IMR-90 (cell line): ENCODE measurements at regions of chr2 and their contacts with region 1.

Region 1: GRCh38 chr2:237181844-237182243 is 96.2 kb downstream of the COPS8 start:
- DNase-seq: peak; percentile 100
- ATAC-seq: peak; percentile 43
- H3K4me3 ChIP-seq: no peak overlapping the region
- H3K27ac ChIP-seq: peak overlapping the region; percentile 93
- H3K4me1 ChIP-seq: peaks cover 42% of the 10 kb centered on the region
- H3K27me3 ChIP-seq: no peaks in the 10 kb centered on the region
- CTCF ChIP-seq: no peak
- POLR2A ChIP-seq: no peak
- RAD21 ChIP-seq: no peak; the same call in 1 of the 2 replicates

Region 2: DNA sequence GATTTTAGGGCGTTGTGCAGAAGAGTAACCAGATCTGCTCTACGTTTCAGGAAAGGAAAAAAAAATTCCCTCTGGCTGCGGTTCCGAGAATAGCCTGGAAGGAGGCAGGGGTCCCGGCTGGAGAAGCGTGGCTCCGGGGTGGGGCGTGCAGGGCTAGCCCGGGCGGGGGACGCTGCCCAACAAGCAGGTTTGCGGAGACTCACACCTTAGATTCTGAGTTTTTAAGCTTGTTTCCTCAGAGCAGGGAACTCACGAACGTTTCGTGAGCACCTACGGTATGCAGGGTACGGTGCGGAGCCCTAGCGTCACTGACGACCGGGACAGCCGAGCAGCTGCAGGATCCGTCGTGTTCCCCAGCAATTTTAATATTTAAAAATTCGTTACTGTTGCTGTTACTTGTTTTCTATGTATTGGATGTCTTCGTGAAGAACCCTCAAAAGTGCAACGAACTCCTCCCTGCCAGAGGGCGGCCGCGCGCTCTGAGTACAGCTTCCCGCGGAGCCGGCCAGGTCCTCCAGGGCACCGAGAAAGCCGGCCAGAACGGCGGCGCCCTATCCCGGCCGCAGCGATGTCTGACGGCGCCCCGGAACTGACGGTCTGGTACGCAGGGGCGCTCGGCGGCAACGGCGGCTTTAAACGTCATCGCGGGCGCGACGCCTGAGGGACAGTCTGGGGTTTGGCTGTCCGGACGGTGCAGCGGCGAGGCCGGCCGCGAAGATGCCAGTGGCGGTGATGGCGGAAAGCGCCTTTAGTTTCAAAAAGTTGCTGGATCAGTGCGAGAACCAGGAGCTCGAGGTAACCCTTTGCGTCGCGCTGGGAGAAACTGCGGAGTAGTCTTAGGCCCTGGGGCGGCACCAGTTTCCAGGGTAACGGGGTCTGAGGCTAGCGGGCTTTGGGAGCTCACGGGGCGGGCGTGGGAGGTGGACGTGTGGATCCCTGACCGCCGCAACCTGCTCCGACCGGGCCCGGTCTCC is 96.3 kb before region 1 on chr2 and contains the start of gene COPS8:
- CTCF ChIA-PET with region 1: no interaction called
- POLR2A ChIA-PET with region 1: no interaction called
- dilution Hi-C with region 1: no loop called
- in situ Hi-C with region 1: no loop called
- intact Hi-C with region 1: no loop called
- DNase-seq: peak; percentile 91
- ATAC-seq: peak; percentile 99
- H3K4me3 ChIP-seq: peak within 1 kb of the TSS; percentile 66
- H3K27ac ChIP-seq: peak within 1 kb of the TSS; percentile 82
- H3K4me1 ChIP-seq: no peaks in the 10 kb centered on the region; the same call in 1 of the 2 replicates
- H3K27me3 ChIP-seq: no peaks in the 10 kb centered on the region
- CTCF ChIP-seq: peak; percentile 26
- POLR2A ChIP-seq: peak; percentile 96
- RAD21 ChIP-seq: no peak; the same call in 1 of the 2 replicates
- total RNA-seq, gene COPS8: 47.0 and 61.4 TPM in 2 replicates

Region 3: GRCh38 chr2:237128026-237128703 is 53.7 kb before region 1 on chr2:
- CTCF ChIA-PET with region 1: no interaction called
- POLR2A ChIA-PET with region 1: no interaction called
- dilution Hi-C with region 1: no loop called
- in situ Hi-C with region 1: no loop called
- intact Hi-C with region 1: no loop called
- DNase-seq: peak; percentile 100
- ATAC-seq: peak; percentile 97
- H3K4me3 ChIP-seq: no peak overlapping the region
- H3K27ac ChIP-seq: peak overlapping the region; percentile 83
- H3K4me1 ChIP-seq: peaks cover 23% of the 10 kb centered on the region
- H3K27me3 ChIP-seq: no peaks in the 10 kb centered on the region
- CTCF ChIP-seq: peak; percentile 25; the same call in 1 of the 2 replicates
- POLR2A ChIP-seq: no peak
- RAD21 ChIP-seq: peak; percentile 28

Region 4: DNA sequence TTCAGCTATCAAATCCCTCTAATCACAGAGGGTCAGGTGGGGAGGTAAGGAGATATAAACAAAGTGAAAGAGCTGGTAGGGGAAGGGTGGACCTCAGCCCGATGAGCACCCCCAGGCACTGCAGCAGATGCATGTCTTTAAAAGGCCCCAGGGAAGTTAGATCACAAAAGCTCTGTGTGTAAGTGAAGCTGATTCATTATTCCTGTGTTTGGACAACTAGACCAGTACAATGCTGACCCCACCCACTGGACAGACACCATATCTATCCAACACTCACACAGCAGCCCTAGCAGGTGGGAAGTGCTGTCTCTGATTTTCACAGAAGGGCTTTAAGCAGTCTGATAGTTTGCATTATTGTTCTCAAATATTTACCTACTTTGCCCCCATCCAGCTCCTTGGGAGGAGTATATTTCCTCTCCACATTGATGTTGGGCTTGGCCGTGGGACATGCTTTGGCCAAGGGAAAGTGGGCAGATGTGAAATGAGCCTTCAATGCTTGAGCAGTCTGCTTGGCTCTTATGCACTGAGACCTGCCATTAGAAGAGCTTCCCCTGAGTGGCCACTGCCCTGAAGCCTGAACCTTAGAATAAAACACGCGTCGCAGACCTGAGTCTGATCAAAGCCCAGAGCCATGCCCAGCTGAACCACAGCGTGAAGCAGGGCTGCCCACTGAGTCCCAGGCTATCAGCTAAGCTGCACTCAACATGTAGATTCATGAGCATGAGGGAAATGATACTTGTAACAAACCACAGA is 15.2 kb after region 1 on chr2:
- CTCF ChIA-PET with region 1: interaction called, 5 read pairs
- POLR2A ChIA-PET with region 1: interaction called, 13 read pairs
- dilution Hi-C with region 1: no loop called
- in situ Hi-C with region 1: no loop called
- intact Hi-C with region 1: no loop called
- DNase-seq: peak; percentile 96
- ATAC-seq: peak; percentile 68
- H3K4me3 ChIP-seq: no peak overlapping the region
- H3K27ac ChIP-seq: peak overlapping the region; percentile 98
- H3K4me1 ChIP-seq: peaks cover 49% of the 10 kb centered on the region
- H3K27me3 ChIP-seq: no peaks in the 10 kb centered on the region
- CTCF ChIP-seq: no peak
- POLR2A ChIP-seq: peak; percentile 24; the same call in 1 of the 2 replicates
- RAD21 ChIP-seq: peak; percentile 18; the same call in 1 of the 2 replicates

Region 5: DNA sequence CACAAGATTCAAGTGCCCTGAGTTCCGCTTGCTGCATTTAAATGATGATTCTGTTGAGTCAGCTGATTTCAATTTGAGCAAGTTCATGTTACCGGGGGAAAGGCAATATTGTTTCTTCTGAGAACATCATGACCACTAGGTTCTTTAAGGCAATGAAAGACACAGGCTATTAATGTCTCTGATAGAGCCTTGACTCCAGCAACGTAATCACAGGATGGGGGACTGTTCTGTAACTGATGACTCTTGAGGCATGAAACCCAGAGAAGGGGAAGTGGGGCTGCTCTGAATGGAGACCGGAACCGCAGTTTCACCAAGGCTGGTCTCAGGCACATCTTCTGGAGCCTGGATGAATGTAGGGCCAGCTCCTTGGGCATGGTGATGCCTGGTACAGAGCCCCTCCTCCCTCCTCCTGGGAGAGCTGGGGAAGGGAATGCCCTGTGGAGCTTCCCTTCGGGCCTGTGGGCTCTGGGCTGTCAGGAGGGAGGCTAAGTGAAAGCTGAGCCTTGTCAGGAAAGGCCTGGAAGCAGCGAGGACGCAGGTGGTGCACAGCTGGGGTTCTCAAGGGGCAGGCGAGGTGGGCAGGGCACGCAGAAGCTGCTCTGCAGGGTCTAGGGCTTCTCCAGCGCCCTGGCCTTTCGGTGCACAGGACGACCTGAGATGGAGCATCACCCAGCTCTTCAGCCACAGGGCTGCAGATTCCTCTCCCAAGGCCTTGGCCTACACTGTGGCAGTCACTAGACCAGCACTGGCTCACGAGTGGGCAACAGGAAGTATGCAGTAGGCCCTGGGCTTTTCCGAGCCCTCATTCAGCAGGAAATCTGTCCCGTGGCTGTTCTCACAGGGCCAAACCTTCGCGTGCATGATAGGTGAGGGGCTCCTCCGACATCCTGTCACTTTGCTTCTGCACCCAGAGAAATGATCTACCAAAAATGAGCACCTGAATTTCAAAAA is 347.9 kb after region 1 on chr2:
- CTCF ChIA-PET with region 1: no interaction called
- POLR2A ChIA-PET with region 1: interaction called, 17 read pairs
- dilution Hi-C with region 1: no loop called
- in situ Hi-C with region 1: no loop called
- intact Hi-C with region 1: no loop called
- DNase-seq: no peak
- ATAC-seq: no peak
- H3K4me3 ChIP-seq: no peak overlapping the region
- H3K27ac ChIP-seq: no peak overlapping the region
- H3K4me1 ChIP-seq: no peaks in the 10 kb centered on the region
- H3K27me3 ChIP-seq: no peaks in the 10 kb centered on the region
- CTCF ChIP-seq: no peak
- POLR2A ChIP-seq: no peak
- RAD21 ChIP-seq: no peak

Region 6: DNA sequence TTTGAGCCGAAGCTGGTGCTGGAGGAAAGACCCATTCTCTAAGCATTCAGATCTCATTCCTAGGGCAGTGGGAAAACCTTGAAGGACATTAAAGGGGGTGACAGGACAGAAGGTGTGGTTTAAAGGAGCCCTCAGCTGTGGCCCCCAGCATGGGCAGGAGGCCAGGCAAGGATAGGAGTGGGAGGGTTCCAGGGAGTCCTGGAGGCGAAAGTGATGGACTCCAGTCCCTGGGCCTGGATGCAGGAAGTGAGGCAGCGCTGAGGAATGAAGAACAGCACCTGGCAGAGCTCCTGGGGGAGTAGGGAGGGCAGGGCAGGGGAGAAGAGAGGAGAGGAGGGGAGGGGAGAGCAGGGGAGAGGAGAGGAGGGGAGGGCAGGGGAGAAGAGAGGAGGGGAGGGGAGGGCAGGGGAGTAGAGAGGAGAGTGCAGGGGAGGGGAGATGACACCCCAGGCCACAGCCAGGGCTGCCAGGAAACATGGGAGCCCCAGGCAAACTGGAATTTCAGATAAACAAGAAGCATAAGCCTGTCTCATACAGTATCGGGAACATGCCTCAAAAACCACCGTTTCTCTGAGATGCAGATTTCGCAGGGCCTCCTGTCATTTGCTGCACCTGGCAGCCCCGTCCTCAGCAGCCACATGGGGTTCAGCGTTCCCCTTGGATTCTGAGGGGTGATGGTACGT is 683.2 kb after region 1 on chr2:
- CTCF ChIA-PET with region 1: no interaction called
- POLR2A ChIA-PET with region 1: no interaction called
- dilution Hi-C with region 1: no loop called
- in situ Hi-C with region 1: no loop called
- intact Hi-C with region 1: no loop called
- DNase-seq: peak; percentile 70
- ATAC-seq: peak; percentile 55
- H3K4me3 ChIP-seq: no peak overlapping the region
- H3K27ac ChIP-seq: peak overlapping the region; percentile 79
- H3K4me1 ChIP-seq: peaks cover 21% of the 10 kb centered on the region
- H3K27me3 ChIP-seq: no peaks in the 10 kb centered on the region
- CTCF ChIP-seq: no peak
- POLR2A ChIP-seq: no peak
- RAD21 ChIP-seq: no peak